ENCODE measurements at regions of chr2 and their contacts with region 1.

Region 1: DNA sequence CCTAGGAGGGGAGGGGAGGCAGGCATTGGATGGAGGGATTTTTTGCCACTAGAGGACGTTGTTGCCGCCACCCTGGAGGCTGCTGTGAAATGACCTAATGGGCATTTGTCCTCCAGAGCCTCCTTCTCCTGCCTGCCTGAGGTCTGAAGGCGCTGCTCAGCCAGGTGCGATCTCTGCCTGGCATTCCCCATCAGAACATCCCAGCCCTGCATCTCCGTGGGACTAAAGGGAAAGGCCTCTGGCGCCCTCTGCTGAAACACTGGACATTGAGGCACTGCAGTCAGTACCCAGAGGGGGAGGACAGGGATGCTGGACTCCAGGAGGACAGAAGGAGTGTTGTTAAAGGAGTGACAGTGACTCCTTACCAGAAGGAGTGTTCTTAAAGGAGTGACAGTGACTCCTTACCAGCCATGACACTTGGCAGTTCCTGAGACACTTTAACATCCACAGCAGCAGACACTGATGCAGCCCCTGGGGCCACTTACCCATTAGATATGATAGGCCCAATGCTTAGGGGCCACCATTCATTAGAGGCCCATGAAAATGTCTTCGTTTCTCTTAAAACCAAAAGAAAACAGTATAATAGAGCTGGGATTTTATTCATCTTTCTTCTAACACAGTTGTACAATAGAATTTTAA is 17.0 kb downstream of the THNSL2 start:
- DNase-seq: peak; percentile 82
- H3K4me3 ChIP-seq: peak overlapping the region in 1 of 2 experiments; percentile 43; a peak in 1 of 4 replicates
- H3K27ac ChIP-seq: no peak overlapping the region
- H3K4me1 ChIP-seq: peaks cover 0 to 7% of the 10 kb centered on the region in 2 experiments; a peak in 1 of 4 replicates
- H3K27me3 ChIP-seq: no peaks in the 10 kb centered on the region
- CTCF ChIP-seq: peak; percentile 62
- EP300 ChIP-seq: no peak
- RAD21 ChIP-seq: peak; percentile 78

Region 2: GRCh38 chr2:88148929-88149438 is 38.2 kb before region 1 on chr2:
- CTCF ChIA-PET with region 1: no interaction called
- POLR2A ChIA-PET with region 1: no interaction called
- DNase-seq: no peak
- H3K4me3 ChIP-seq: no peak overlapping the region
- H3K27ac ChIP-seq: no peak overlapping the region
- H3K4me1 ChIP-seq: no peaks in the 10 kb centered on the region
- H3K27me3 ChIP-seq: no peaks in the 10 kb centered on the region
- CTCF ChIP-seq: no peak
- EP300 ChIP-seq: no peak
- RAD21 ChIP-seq: no peak

Region 3: DNA sequence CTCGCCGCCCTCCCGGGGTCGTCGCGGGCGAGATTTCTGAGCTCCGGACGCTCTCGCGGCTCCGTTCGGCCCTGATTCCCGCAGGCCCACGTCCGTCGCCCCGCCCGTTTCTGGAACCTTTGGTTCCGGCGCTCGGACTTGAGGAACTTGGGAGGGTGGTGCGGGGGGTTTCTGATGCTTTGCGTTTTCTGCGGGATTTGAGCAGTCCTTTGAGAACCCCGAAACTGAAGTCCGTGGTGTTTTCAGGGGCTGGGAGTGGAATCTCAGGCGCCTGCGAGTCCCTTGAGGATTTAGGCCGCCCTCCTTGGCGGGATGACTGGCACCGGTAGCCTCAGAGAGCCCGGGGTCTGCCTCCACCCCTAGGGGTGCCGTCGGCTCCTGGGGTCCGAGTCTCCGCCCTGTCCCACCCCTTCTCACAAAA is 16.7 kb before region 1 on chr2:
- CTCF ChIA-PET with region 1: interaction called, 14 read pairs
- POLR2A ChIA-PET with region 1: no interaction called
- DNase-seq: peak; percentile 39
- H3K4me3 ChIP-seq: peak overlapping the region in 1 of 2 experiments; percentile 27; a peak in 2 of 4 replicates
- H3K27ac ChIP-seq: no peak overlapping the region
- H3K4me1 ChIP-seq: no peaks in the 10 kb centered on the region
- H3K27me3 ChIP-seq: no peaks in the 10 kb centered on the region; the same call in 1 of the 2 replicates
- CTCF ChIP-seq: no peak
- EP300 ChIP-seq: no peak
- RAD21 ChIP-seq: no peak

Region 4: DNA sequence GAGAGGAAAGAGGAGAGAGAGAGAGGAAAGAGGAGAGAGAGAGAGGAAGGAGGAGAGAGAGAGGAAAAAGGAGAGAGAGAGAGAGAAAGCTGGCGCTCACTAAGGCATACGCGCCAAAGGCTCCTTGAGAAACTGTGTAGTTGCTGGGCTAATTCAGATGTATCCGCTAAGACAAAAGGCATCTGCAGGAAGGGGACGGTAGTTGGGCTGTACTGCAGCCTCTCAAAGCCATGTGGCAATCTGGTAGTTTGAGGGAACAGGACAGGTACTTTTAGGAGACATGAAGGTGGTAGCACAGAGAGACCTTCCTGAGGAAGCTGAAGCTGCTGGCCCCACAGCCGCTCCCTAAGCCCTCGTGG is 14.6 kb after region 1 on chr2:
- CTCF ChIA-PET with region 1: interaction called, 13 read pairs
- POLR2A ChIA-PET with region 1: no interaction called
- DNase-seq: no peak
- H3K4me3 ChIP-seq: no peak overlapping the region
- H3K27ac ChIP-seq: no peak overlapping the region
- H3K4me1 ChIP-seq: peaks cover 0 to 9% of the 10 kb centered on the region in 2 experiments; a peak in 2 of 4 replicates
- H3K27me3 ChIP-seq: peaks cover 7% of the 10 kb centered on the region; the same call in 1 of the 2 replicates
- CTCF ChIP-seq: no peak
- EP300 ChIP-seq: no peak
- RAD21 ChIP-seq: no peak

Region 5: DNA sequence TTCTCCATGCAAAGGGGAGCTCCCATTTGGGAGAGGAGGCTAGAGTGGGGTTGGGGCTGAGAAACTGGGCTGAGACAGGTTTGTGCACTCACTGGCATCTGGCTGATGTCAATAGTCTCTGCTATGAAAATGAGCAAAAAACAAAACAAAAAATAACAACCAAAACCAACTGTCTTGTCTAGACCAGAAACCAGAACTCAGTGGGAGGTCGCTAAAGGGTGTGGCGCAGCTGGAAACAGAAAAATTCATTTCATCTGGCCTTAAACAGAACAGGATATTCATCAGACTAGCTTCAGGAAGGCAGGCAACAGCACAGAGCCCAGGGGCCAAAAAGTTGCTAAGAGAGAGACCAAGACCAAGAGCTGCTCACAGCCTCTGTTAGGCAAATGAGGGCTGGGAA is 109.1 kb after region 1 on chr2:
- CTCF ChIA-PET with region 1: no interaction called
- POLR2A ChIA-PET with region 1: no interaction called
- DNase-seq: no peak
- H3K4me3 ChIP-seq: no peak overlapping the region
- H3K27ac ChIP-seq: no peak overlapping the region
- H3K4me1 ChIP-seq: no peaks in the 10 kb centered on the region
- H3K27me3 ChIP-seq: no peaks in the 10 kb centered on the region
- CTCF ChIP-seq: no peak
- EP300 ChIP-seq: no peak
- RAD21 ChIP-seq: no peak

Region 6: GRCh38 chr2:88400037-88400767 is 213.0 kb after region 1 on chr2:
- CTCF ChIA-PET with region 1: interaction called, 10 read pairs
- POLR2A ChIA-PET with region 1: no interaction called
- DNase-seq: peak; percentile 32
- H3K4me3 ChIP-seq: no peak overlapping the region
- H3K27ac ChIP-seq: peak overlapping the region in 1 of 2 experiments; percentile 92; a peak in 2 of 4 replicates
- H3K4me1 ChIP-seq: peaks cover 0 to 4% of the 10 kb centered on the region in 2 experiments; a peak in 1 of 4 replicates
- H3K27me3 ChIP-seq: no peaks in the 10 kb centered on the region
- CTCF ChIP-seq: no peak
- EP300 ChIP-seq: peak in 1 of 2 experiments; percentile 75; a peak in 1 of 4 replicates
- RAD21 ChIP-seq: no peak

Measured in SK-N-SH (cell line).